ENCODE measurements at regions of chr7 and their contacts with region 1.

Region 1: DNA sequence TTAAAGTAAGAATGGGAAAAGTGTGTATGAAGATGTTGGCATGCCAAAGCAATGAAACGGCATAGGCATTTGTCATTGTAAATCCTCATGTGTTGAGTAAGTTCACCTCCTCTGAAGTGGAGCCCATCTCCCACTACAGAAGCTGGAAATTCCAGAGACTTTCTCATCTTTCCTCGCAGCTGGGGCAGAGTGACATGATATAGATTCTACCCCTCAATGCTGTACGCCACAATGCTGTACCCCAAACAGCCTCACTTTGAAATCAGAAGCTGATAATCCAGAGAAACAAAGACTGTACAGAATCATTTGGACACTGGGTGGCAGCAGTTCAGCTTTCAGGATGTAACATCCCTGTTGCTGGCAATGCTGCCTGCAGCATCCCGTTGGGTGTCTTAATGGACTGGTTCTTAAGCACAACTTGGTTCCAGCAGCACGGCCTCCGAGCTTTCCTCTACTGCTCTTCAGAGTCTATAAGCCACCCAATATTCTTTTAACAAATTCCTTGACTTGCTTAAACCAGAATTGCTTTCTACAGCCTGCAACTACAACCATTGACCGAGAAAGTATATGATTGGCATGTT is 18.8 kb downstream of the ZC3HAV1L start:
- DNase-seq: peak; percentile 51 to 56
- H3K4me3 ChIP-seq: no peak overlapping the region
- H3K27ac ChIP-seq: no peak overlapping the region
- H3K4me1 ChIP-seq: no peaks in the 10 kb centered on the region
- H3K27me3 ChIP-seq: no peaks in the 10 kb centered on the region
- CTCF ChIP-seq: peak; percentile 83

Region 2: DNA sequence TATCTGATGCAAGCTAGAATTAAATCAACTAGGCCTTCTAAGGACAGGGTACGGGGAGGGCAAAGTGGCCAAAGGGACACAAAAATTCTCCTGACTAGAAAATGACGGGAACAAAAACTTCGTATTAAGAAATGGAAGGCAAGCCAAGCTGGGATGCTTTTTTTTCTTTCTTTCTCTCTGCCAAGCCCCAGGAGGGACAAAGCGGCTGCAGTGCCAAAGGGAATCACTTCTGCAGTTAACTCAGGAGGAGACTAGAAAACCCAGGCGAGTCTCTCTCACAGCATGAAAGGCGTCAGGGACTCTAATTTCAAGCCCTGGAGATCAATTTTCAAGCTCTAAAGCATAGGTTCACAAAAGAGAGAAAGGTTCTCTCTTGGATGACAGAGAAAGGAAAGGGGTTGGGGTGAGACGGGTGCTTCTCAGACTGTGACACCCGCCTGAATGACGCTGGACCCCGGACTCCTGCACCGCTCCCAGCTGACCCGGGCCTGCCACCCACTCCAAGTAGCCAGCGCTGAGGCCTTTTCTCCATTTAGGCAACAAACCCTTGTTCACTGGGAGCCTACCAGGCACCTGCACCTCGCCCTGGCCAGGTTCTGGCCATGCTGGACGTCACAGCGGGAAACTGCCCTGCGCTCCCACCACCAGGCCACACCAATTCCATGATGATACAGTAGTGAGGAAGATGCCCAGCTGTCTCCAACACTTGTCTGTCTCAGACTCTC is 92.4 kb before region 1 on chr7:
- CTCF ChIA-PET with region 1: interaction called, 13 read pairs
- POLR2A ChIA-PET with region 1: no interaction called
- intact Hi-C with region 1: no loop called
- DNase-seq: no peak
- H3K4me3 ChIP-seq: no peak overlapping the region
- H3K27ac ChIP-seq: no peak overlapping the region
- H3K4me1 ChIP-seq: peaks cover 9% of the 10 kb centered on the region
- H3K27me3 ChIP-seq: no peaks in the 10 kb centered on the region
- CTCF ChIP-seq: no peak